Activated CD4-positive, alpha-beta T cell treated with anti-CD3 and anti-CD28 coated beads, Interleukin-2, amount 10 ng/mL, durations not matched to agents 24 days and 14 days (primary cell): ENCODE measurements at regions of chr2 and their contacts with region 1.

Region 1: GRCh38 chr2:169109502-169110409 is 40.4 kb downstream of the DHRS9 start:
- DNase-seq: peak; percentile 91
- H3K4me3 Mint-ChIP-seq: no peak overlapping the region
- H3K27ac Mint-ChIP-seq: no peak overlapping the region
- H3K4me1 Mint-ChIP-seq: peaks cover 40% of the 10 kb centered on the region
- H3K27me3 Mint-ChIP-seq: peaks cover 2% of the 10 kb centered on the region

Region 2: DNA sequence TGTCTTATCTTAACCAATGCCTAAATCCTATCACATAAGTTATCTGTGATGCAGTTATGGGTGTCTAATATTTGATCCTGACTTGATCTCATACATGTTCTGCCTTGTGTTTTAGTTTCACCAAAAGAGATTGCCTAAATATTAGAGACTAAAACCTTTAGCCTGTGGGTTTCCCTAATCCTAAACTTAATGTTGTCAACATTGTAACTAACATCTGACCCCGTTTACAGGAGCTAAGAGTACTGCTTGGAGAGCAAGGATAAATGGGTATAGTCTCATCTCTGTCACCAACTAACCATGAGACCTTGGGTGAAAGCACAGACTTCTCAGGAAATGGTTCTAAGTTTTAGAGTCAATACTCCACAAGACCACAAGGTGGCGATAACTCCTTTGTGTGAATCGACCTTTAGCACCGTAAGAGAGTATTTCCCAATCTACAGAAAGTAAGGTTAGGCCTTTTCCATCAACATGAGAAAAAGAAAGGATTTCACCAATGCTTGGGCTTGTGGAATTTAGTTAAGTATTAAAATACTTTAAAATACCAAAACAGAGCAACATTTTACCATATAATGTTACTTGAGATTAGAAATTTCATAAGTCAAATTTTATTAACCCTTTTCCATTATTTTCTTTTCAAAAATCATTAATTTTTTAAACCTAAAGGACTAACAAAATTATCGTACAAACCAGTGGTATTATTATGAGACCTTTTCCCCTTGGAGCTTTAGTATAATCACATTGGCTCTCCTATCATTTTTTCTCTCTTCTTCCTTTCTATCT is 148.1 kb before region 1 on chr2:
- intact Hi-C with region 1: loop called (anchors 1 kb)
- DNase-seq: peak; percentile 85
- H3K4me3 Mint-ChIP-seq: no peak overlapping the region
- H3K27ac Mint-ChIP-seq: no peak overlapping the region
- H3K4me1 Mint-ChIP-seq: peaks cover 21% of the 10 kb centered on the region
- H3K27me3 Mint-ChIP-seq: peaks cover 4% of the 10 kb centered on the region

Region 3: DNA sequence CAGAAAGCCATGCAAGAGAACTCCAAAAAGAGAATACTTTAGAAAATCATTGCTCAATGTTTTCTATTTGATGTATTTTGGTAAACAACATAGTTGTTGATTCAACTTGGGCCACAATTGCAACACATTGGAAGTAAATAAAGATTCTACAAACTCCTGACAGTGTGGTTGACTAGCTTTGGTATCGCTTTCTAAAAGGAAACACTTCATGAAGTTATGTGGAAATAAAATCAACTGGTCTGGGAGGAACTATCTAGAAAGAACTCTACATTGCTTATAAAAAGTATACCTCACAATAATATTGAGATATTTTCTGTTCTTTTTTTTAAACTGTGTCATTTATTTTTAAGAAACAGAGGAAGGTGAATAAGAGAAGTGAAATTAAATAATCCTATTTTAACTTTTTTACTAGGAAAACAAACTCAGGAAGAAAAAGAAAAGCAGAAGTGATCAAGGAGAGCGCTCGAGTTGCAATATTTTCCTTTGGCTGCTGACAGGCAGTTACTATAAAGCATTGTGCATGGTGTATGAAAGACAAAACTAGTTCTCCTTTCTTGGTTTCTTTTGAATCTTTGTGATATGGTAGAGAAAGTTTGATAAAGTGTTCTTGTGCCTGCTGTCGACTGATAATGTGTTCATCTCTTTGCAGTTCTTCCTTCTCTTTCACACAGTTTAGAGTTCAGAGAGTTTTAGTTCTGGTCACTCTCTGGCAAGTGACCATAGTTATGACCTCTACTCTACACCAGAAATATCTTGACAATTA is 37.4 kb before region 1 on chr2:
- intact Hi-C with region 1: loop called (anchors 5 kb)
- DNase-seq: no peak
- H3K4me3 Mint-ChIP-seq: peak overlapping the region; percentile 25
- H3K27ac Mint-ChIP-seq: peak overlapping the region; percentile 31
- H3K4me1 Mint-ChIP-seq: peaks cover 31% of the 10 kb centered on the region
- H3K27me3 Mint-ChIP-seq: no peaks in the 10 kb centered on the region

Region 4: DNA sequence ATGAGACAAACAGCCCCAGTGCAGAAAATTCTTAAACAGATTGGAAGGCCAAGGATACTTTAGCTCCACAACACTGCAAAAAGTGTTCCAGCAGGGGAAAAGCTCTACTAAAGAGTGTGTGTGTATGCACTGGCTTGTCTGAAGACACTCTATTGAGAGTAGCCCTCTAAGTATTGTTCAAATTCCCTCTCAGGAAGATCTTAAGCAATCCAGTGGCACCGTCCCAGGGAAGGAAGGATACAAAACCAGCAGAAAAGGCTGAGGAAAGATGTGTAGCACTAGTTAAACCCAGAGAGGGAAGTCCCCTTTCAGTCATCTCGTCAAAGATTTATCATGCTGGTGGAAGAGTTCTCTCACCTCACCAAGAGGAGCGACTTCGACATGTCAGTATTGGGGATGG is 10.1 kb after region 1 on chr2:
- intact Hi-C with region 1: no loop called
- DNase-seq: no peak
- H3K4me3 Mint-ChIP-seq: no peak overlapping the region
- H3K27ac Mint-ChIP-seq: no peak overlapping the region
- H3K4me1 Mint-ChIP-seq: peaks cover 2% of the 10 kb centered on the region
- H3K27me3 Mint-ChIP-seq: peaks cover 33% of the 10 kb centered on the region

Region 5: GRCh38 chr2:169141713-169142352 is 32.1 kb after region 1 on chr2:
- intact Hi-C with region 1: loop called (anchors 1 kb)
- DNase-seq: peak; percentile 88
- H3K4me3 Mint-ChIP-seq: no peak overlapping the region
- H3K27ac Mint-ChIP-seq: no peak overlapping the region
- H3K4me1 Mint-ChIP-seq: no peaks in the 10 kb centered on the region
- H3K27me3 Mint-ChIP-seq: peaks cover 2% of the 10 kb centered on the region

Region 6: DNA sequence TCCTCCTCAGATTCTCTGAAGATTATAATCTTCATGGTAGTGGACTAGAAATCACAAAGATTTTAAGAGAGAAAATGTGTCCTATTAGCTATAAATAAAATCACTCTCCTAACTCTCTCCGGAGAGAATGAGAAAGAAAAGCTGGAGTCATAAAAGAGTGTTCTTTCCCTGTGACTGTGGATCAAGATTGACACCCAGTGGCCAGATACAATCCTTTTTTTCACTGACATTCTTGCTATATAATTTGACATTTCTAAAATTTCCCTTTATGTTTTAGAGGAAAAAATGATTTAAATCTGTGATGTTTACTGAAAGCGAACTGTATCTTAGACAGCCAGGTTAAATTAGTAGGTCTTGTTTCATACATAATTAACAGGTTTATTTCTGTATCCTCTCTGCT is 287.9 kb after region 1 on chr2:
- intact Hi-C with region 1: loop called (anchors 2 kb)
- DNase-seq: no peak
- H3K4me3 Mint-ChIP-seq: no peak overlapping the region
- H3K27ac Mint-ChIP-seq: no peak overlapping the region
- H3K4me1 Mint-ChIP-seq: no peaks in the 10 kb centered on the region
- H3K27me3 Mint-ChIP-seq: peaks cover 5% of the 10 kb centered on the region